Lower lobe of right lung (tissue), 2 donors: ENCODE measurements at regions of chr11 and their contacts with region 1.

Region 1: GRCh38 chr11:6377902-6378639 is 12.2 kb upstream of the SMPD1 start:
- DNase-seq: no peak
- ATAC-seq: peak; percentile 47 to 67
- H3K4me3 ChIP-seq: no peak overlapping the region
- H3K27ac ChIP-seq: no peak overlapping the region
- H3K4me1 ChIP-seq: peaks cover 12% of the 10 kb centered on the region
- H3K27me3 ChIP-seq: no peaks in the 10 kb centered on the region
- CTCF ChIP-seq: no peak

Region 2: DNA sequence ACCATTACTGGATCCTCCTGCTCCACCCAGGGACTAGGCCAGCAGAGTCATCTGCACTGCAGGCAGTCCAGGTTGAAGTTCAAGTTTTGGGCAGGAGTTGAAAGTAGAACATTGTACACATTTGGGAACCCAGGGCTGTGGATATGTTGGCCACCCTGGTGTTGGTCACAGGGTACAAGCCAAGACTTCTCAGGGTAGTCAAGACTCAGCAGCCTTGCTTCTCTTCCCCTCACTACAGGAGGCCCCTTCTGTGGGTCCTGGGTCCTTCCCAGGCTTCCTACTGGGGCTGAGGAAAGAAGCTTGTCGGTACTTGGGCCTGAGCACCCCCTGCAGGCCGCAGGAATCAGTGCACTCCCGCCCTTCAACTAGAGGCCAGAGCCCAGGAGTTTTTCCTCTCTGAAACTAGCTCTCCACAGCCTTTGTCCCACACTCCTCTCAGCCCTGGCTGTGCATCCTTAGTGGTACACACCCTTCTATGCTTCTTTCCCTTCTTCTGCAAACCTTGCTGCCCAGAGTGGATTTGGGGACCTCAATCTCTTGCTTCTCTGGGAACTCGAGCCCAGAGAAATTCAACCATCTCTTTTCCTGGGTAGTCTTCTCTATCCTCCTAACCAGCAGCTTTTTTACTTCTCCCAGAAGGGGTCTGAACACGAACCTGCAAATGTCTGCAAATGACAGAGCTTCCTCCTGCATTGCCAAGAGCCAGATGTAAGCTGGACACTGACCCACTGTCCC is 65.4 kb after region 1 on chr11:
- intact Hi-C with region 1: loop called (anchors 5 kb)
- DNase-seq: peak; percentile 62
- ATAC-seq: peak; percentile 84 to 87
- H3K4me3 ChIP-seq: no peak overlapping the region
- H3K27ac ChIP-seq: no peak overlapping the region
- H3K4me1 ChIP-seq: peaks cover 16% of the 10 kb centered on the region
- H3K27me3 ChIP-seq: no peaks in the 10 kb centered on the region
- CTCF ChIP-seq: peak; percentile 88

Region 3: GRCh38 chr11:6556139-6556949 is 178.3 kb after region 1 on chr11:
- intact Hi-C with region 1: no loop called
- DNase-seq: no peak
- ATAC-seq: no peak
- H3K4me3 ChIP-seq: no peak overlapping the region
- H3K27ac ChIP-seq: no peak overlapping the region
- H3K4me1 ChIP-seq: no peaks in the 10 kb centered on the region
- H3K27me3 ChIP-seq: no peaks in the 10 kb centered on the region
- CTCF ChIP-seq: no peak